ENCODE measurements at regions of chr7 and their contacts with region 1.

Region 1: GRCh38 chr7:101077303-101078089 is 7.8 kb upstream of the TRIM56 start:
- DNase-seq: peak; percentile 73
- H3K4me3 Mint-ChIP-seq: no peak overlapping the region
- H3K27ac Mint-ChIP-seq: no peak overlapping the region
- H3K4me1 Mint-ChIP-seq: peaks cover 7% of the 10 kb centered on the region
- H3K27me3 Mint-ChIP-seq: peaks cover 9% of the 10 kb centered on the region

Region 2: GRCh38 chr7:100803398-100804233 is 273.9 kb before region 1 on chr7:
- intact Hi-C with region 1: loop called (anchors 1 kb)
- DNase-seq: peak; percentile 42
- H3K4me3 Mint-ChIP-seq: no peak overlapping the region
- H3K27ac Mint-ChIP-seq: peak overlapping the region; percentile 71
- H3K4me1 Mint-ChIP-seq: peaks cover 10% of the 10 kb centered on the region
- H3K27me3 Mint-ChIP-seq: peaks cover 13% of the 10 kb centered on the region

Region 3: DNA sequence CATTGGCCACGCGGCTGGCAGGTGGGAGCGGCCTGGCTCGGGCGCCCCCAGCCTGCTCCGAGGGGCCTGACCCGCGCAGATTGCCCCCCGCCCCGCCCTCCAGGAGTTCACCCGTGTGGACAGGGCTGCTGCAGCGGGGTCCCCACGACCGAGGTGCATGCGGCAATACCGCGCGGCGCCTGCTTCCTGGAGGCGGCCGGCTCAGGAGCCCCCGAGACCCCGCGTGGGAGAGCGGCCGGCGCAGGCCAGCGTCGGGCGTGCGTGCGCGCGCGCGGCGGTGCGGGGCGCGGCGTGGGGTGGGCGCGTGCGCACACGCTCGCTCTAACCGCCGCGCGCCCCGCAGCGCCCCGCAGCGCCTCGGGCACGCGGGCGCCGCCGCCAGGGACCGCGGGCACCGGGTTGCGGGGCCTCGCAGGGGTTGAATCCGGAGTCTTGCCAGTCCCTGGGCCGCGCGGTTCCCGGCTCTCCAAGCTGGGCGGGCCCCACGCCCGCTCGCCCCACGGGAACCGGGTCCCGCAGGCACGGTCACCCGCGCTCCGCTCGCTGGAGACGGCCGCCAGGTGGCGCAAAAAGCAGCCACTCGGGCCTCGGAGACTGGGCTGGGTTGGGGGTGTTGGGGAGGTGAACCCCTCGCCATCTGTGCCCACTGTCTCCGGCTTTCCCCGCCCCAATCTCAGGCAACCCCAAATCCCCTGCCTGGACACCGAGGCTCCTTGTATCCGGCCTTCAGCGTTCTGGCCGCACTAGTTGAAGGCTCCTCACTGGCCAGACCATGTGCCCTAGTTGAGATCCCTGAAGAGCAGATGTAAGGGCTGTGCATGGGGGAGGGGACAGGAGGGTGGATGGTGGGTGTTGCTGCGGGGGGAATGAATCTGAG is 180.5 kb before region 1 on chr7:
- intact Hi-C with region 1: loop called (anchors 1 kb)
- DNase-seq: peak; percentile 51
- H3K4me3 Mint-ChIP-seq: peak overlapping the region; percentile 63
- H3K27ac Mint-ChIP-seq: no peak overlapping the region
- H3K4me1 Mint-ChIP-seq: peaks cover 7% of the 10 kb centered on the region
- H3K27me3 Mint-ChIP-seq: peaks cover 51% of the 10 kb centered on the region

Measured in activated T-helper 1 cell treated with anti-CD3 and anti-CD28 coated beads, Interleukin-12 subunit alpha, Interleukin-12 subunit beta, Interleukin-2, Interleukin-4 antibody, amounts not matched to agents 30 ng/mL and 10 ng/mL and 1 ng/mL, durations not matched to agents 14 hours and 24 hours and 36 hours (primary cell).